Endothelial cell of umbilical vein (primary cell): ENCODE measurements at regions of chr19 and their contacts with region 1.

Region 1: GRCh38 chr19:11035441-11036377 is 53.6 kb upstream of the LDLR start:
- DNase-seq: peak; percentile 69
- H3K4me3 ChIP-seq: no peak overlapping the region
- H3K27ac ChIP-seq: no peak overlapping the region
- H3K4me1 ChIP-seq: no peaks in the 10 kb centered on the region
- H3K27me3 ChIP-seq: no peaks in the 10 kb centered on the region
- CTCF ChIP-seq: peak; percentile 86 to 94
- POLR2A ChIP-seq: no peak

Region 2: DNA sequence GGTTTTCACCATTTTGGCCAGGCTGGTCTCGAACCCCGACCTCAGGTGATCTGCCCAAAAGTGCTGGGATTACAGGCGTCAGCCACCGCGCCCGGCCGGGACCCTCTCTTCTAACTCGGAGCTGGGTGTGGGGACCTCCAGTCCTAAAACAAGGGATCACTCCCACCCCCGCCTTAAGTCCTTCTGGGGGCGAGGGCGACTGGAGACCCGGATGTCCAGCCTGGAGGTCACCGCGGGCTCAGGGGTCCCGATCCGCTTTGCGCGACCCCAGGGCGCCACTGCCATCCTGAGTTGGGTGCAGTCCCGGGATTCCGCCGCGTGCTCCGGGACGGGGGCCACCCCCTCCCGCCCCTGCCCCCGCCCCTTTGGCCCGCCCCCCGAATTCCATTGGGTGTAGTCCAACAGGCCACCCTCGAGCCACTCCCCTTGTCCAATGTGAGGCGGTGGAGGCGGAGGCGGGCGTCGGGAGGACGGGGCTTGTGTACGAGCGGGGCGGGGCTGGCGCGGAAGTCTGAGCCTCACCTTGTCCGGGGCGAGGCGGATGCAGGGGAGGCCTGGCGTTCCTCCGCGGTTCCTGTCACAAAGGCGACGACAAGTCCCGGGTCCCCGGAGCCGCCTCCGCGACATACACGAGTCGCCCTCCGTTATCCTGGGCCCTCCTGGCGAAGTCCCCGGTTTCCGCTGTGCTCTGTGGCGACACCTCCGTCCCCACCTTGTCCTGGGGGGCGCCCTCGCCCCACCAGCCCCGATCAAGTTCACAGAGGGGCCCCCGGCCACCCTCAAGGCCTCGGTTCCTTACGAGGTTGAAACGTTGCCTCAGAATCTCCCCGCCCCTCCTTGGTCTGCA is 54.6 kb after region 1 on chr19:
- CTCF ChIA-PET with region 1: interaction called, 30 read pairs
- POLR2A ChIA-PET with region 1: no interaction called
- dilution Hi-C with region 1: no loop called
- intact Hi-C with region 1: loop called (anchors 1 kb)
- DNase-seq: peak; percentile 91
- H3K4me3 ChIP-seq: peak overlapping the region; percentile 58 to 96 (median 68)
- H3K27ac ChIP-seq: peak overlapping the region; percentile 87
- H3K4me1 ChIP-seq: peaks cover 60% of the 10 kb centered on the region
- H3K27me3 ChIP-seq: no peaks in the 10 kb centered on the region
- CTCF ChIP-seq: no peak
- POLR2A ChIP-seq: peak; percentile 68

Region 3: DNA sequence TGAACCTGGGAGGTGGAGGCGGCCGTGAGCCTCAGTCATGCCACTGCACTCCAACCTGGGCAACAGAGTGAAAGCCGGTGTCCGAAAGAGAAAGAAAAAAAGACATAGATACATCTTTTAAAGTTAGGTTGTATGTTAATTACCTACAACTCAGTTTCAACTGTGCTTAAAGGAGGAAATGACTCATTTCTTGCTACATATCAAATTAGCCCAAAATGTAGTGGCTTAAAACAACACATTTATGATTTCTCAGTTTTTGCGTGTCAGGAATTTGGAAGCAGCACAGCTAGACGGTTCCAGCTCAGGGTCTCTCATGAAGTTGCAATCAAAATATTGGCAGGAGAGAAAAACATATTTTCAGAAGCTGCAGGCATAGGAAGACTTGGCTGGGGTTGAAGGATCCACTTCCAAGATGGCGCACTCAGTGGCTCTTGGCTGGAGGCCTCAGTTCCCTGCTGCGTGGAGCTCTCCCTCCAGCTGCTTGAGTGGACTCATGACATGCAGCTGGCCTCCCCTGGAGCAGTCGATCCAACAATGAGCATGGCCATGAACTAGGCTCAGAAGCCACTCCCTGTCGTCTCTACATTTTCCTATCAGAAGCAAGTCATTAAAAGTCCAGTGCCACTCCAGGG is 60.6 kb after region 1 on chr19:
- CTCF ChIA-PET with region 1: interaction called, 30 read pairs
- POLR2A ChIA-PET with region 1: no interaction called
- dilution Hi-C with region 1: no loop called
- intact Hi-C with region 1: no loop called
- DNase-seq: peak; percentile 88
- H3K4me3 ChIP-seq: peak overlapping the region in 1 of 3 experiments; percentile 29
- H3K27ac ChIP-seq: peak overlapping the region; percentile 97
- H3K4me1 ChIP-seq: peaks cover 62% of the 10 kb centered on the region
- H3K27me3 ChIP-seq: no peaks in the 10 kb centered on the region
- CTCF ChIP-seq: no peak
- POLR2A ChIP-seq: peak; percentile 23

Region 4: GRCh38 chr19:11164879-11165406 is 129.2 kb after region 1 on chr19:
- CTCF ChIA-PET with region 1: interaction called, 6 read pairs
- POLR2A ChIA-PET with region 1: no interaction called
- dilution Hi-C with region 1: no loop called
- intact Hi-C with region 1: loop called (anchors 1 kb)
- DNase-seq: peak; percentile 51
- H3K4me3 ChIP-seq: no peak overlapping the region
- H3K27ac ChIP-seq: peak overlapping the region; percentile 35
- H3K4me1 ChIP-seq: peaks cover 31% of the 10 kb centered on the region
- H3K27me3 ChIP-seq: no peaks in the 10 kb centered on the region
- CTCF ChIP-seq: no peak
- POLR2A ChIP-seq: no peak

Region 5: GRCh38 chr19:11203194-11204075 is 167.7 kb after region 1 on chr19:
- CTCF ChIA-PET with region 1: interaction called, 27 read pairs
- POLR2A ChIA-PET with region 1: no interaction called
- dilution Hi-C with region 1: no loop called
- intact Hi-C with region 1: loop called (anchors 1 kb)
- DNase-seq: peak; percentile 54
- H3K4me3 ChIP-seq: no peak overlapping the region
- H3K27ac ChIP-seq: peak overlapping the region; percentile 49
- H3K4me1 ChIP-seq: peaks cover 5% of the 10 kb centered on the region
- H3K27me3 ChIP-seq: no peaks in the 10 kb centered on the region
- CTCF ChIP-seq: peak; percentile 80 to 93
- POLR2A ChIP-seq: no peak